Right ventricle myocardium superior (tissue), 1 donor: ENCODE measurements at regions of chr4 and their contacts with region 1.

Region 1: GRCh38 chr4:82900331-82901128 is at the start of gene THAP9:
- DNase-seq: peak; percentile 99
- ATAC-seq: peak; percentile 97
- total RNA-seq, gene THAP9: 5.6 TPM

Region 2: GRCh38 chr4:82811838-82812341 is 88.6 kb before region 1 on chr4:
- intact Hi-C with region 1: no loop called
- DNase-seq: no peak
- ATAC-seq: no peak

Region 3: DNA sequence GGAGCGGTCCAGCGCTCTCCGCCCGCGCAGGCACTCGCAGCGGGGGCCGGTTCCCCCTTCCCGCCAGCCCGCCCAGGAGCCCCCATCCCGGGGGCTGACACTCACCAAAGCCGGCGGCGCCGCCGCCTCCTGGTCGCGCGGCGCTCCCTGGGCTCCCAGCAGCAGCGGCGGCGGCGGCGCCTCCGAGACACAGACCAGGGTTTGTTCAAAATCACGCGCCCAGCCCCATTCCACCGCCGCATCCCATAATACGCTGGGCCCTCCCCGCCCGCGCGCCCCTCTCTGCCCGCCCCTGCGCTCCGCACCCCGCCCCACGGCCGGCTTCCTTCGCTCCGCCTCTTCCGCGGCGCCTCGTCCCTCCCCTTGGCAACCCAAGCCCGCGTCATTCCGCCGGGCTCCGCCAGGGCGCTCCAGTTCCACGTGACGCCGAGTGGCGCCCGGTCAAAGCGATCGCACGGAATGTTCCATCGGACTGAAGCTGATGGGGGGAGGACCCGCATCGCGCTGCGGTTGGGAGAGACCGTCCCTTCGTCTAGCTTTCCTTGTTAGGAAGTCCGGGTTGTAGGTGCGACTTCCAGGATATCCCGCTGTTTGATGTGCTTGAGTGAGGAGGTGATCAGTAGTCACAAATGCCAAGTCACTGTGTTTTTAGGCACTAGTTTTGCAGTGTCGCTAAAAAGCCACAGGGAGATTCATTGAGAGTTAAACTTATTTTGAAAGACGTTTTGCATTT is 112.3 kb after region 1 on chr4:
- intact Hi-C with region 1: loop called (anchors 5 kb)
- DNase-seq: peak; percentile 98
- ATAC-seq: peak; percentile 98

Region 4: DNA sequence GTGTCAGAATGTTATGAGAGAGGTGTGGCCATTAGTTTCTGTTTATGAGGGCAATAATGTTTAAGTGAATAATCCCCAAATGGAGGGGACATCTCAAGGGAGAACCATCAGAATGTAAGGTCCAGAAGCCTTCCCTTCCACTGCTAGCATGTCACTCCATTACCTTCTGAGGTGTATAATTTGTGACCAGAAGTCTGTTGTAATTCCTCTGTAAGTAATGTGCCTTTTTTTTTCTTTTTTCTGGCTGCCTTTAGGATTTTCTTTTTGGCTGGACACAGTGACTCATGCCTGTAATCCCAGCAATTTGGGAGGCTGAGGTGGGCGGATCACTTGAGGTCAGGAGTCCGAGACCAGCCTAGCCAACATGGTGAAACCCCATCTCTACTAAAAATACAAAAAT is 123.7 kb after region 1 on chr4:
- intact Hi-C with region 1: no loop called
- DNase-seq: no peak
- ATAC-seq: no peak

Region 5: GRCh38 chr4:83240379-83240875 is 339.9 kb after region 1 on chr4:
- intact Hi-C with region 1: no loop called
- DNase-seq: no peak
- ATAC-seq: peak; percentile 45